HCT116 (cell line): ENCODE measurements at regions of chr19 and their contacts with region 1.

Region 1: DNA sequence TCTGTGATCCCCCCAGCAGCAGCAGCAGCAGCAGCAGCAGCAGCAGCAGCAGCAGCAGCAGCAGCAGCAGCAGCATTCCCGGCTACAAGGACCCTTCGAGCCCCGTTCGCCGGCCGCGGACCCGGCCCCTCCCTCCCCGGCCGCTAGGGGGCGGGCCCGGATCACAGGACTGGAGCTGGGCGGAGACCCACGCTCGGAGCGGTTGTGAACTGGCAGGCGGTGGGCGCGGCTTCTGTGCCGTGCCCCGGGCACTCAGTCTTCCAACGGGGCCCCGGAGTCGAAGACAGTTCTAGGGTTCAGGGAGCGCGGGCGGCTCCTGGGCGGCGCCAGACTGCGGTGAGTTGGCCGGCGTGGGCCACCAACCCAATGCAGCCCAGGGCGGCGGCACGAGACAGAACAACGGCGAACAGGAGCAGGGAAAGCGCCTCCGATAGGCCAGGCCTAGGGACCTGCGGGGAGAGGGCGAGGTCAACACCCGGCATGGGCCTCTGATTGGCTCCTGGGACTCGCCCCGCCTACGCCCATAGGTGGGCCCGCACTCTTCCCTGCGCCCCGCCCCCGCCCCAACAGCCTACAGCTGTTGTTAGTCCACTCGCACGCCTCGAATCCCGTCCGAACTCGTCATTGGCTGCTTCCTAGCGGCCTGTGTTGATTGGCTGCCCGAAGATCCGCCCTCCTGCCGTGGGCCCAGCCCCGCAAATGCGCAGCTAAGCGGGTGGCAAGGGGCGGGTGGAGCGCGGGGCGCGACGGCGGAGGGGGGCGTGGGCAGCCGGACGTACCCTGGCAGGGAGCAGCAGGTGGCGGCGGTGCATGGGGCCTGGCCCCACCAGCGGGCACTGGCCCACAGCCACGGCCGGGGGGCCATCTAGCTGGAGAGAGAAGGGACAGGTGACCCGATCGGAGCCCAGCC is 1.4 kb upstream of the SIX5 start:
- DNase-seq: peak; percentile 96
- ATAC-seq: peak; percentile 77
- H3K4me3 ChIP-seq: peak overlapping the region; percentile 62 to 84
- H3K27ac ChIP-seq: peak overlapping the region; percentile 94
- H3K4me1 ChIP-seq: peaks cover 14 to 43% of the 10 kb centered on the region in 2 experiments
- H3K27me3 ChIP-seq: no peaks in the 10 kb centered on the region
- CTCF ChIP-seq: peak; percentile 85 to 86 (median 86); a peak in 5 of 6 replicates
- POLR2A ChIP-seq: peak; percentile 17
- RAD21 ChIP-seq: peak; percentile 88

Region 2: DNA sequence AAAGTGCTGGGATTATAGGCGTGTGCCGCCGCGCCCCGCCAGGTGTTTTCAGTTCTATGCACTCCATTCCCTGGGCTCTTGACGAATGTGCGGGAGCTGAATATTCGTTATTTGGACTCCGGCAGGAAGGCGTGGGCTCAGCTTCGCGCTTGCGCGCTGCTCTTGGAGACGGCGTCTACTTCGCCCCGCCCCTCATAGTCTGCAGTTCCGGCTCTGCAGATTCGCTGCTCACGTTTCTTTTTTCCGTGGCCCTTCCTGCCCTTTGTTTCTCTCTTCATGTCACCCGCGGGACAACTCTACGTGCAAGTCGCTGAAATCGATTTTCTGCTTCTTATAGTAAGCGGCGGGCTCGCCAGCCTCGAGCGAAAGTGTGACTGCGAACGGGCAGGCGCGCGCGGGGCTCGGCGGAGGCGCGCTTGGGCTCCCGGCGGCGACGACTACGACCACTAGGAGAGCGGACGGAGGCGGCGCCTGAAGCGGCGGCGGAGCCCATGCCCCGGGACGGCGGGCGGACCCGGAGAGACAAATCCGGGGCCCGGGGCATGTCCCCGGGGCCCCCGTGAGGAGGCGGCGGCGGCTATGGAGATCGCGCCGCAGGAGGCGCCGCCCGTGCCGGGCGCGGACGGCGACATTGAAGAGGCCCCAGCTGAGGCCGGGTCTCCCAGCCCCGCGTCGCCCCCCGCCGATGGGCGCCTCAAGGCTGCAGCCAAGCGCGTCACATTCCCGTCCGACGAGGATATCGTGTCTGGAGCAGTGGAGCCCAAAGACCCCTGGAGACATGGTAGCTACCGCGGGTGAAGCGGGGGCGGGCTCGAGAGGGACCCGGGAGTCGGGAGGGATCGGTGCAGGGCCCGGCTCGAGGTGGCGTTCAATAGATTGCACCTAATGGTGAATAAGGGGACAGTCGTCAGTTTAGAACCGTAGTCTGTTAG is 677.4 kb before region 1 on chr19 and contains the start of gene PPP1R37:
- CTCF ChIA-PET with region 1: no interaction called
- POLR2A ChIA-PET with region 1: no interaction called
- RAD21 ChIA-PET with region 1: no interaction called
- intact Hi-C with region 1: loop called (anchors 10 kb)
- DNase-seq: peak; percentile 98
- ATAC-seq: peak; percentile 71
- H3K4me3 ChIP-seq: peak within 1 kb of the TSS; percentile 94 to 96
- H3K27ac ChIP-seq: peak within 1 kb of the TSS; percentile 84
- H3K4me1 ChIP-seq: peaks cover 13 to 57% of the 10 kb centered on the region in 2 experiments; a peak in 3 of 4 replicates
- H3K27me3 ChIP-seq: no peaks in the 10 kb centered on the region
- CTCF ChIP-seq: peak in 2 of 3 experiments; percentile 10 to 32; a peak in 1 of 6 replicates
- POLR2A ChIP-seq: peak; percentile 26
- RAD21 ChIP-seq: no peak
- total RNA-seq, gene PPP1R37: 32.7 TPM

Region 3: DNA sequence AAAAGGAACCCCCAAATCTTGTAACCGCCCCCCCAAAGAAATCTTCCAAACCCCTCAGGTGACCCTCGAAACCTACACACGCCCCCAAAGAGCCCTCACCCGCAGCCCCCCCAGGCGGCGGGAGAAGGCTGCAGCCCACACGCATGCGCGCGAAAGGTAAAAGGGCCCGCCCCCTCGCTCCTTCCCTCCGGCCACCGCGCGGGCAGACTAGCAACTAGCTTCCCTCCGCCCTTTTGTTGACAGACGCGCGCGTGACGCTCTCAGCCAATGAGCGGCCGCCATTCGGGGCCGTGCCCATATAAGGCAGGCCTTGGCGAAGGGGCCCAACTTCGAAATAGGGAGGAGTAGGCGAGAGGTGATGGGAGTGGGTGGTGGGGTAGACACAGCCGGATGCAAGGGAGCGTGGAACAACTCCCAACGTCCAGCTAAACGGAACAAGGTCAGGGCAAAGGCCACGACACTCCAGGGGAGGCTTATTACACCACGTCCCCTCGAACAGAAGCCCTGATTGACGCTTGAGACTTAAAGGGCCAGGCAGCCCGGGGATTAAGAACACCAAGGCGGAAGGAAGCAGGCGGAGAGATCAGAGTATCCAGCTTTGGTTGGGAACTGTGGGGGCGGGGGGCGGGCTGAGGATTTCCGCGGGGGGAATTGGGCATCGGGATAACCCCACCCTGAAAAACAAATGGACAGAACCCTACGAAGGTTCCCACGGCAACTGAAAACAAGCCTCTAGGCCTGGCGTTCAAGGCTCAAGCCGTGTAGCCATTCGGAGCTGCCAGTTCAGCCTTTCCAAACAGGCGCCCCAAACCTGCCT is 53.1 kb before region 1 on chr19:
- CTCF ChIA-PET with region 1: interaction called, 9 read pairs
- POLR2A ChIA-PET with region 1: interaction called, 16 read pairs
- RAD21 ChIA-PET with region 1: interaction called in 1 of 2 experiments, 5 read pairs
- intact Hi-C with region 1: loop called (anchors 2 kb)
- DNase-seq: peak; percentile 96
- ATAC-seq: peak; percentile 92
- H3K4me3 ChIP-seq: peak overlapping the region; percentile 52 to 64
- H3K27ac ChIP-seq: peak overlapping the region; percentile 58
- H3K4me1 ChIP-seq: peaks cover 40 to 52% of the 10 kb centered on the region in 2 experiments
- H3K27me3 ChIP-seq: no peaks in the 10 kb centered on the region
- CTCF ChIP-seq: 0 out of 6 replicates have a peak, but pooled peaks of 1 of the 3 experiments have one; percentile 8
- POLR2A ChIP-seq: no peak
- RAD21 ChIP-seq: no peak

Region 4: DNA sequence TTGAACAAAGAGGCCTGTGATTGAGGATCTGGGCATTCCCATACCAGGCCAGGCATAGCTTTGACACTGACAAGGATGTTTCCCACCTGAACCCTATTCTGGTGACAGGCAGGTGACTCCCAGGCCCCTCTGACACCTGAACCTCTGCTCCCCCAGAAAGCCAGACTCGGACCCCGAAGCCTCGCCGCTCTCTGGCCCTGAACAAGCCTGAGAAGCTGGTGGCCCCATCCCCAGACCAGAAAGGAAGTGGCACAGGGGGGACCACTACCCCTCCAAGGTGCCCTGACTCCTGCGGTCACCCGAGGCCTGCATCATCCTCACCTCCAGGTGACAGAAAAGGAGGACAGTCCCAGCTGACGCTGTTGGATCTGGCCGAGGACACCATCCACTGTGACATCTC is 16.1 kb before region 1 on chr19:
- CTCF ChIA-PET with region 1: interaction called, 15 read pairs
- POLR2A ChIA-PET with region 1: interaction called, 10 read pairs
- RAD21 ChIA-PET with region 1: interaction called in 1 of 2 experiments, 3 read pairs
- intact Hi-C with region 1: no loop called
- DNase-seq: no peak
- ATAC-seq: no peak
- H3K4me3 ChIP-seq: no peak overlapping the region
- H3K27ac ChIP-seq: no peak overlapping the region
- H3K4me1 ChIP-seq: no peaks in the 10 kb centered on the region
- H3K27me3 ChIP-seq: no peaks in the 10 kb centered on the region
- CTCF ChIP-seq: no peak
- POLR2A ChIP-seq: no peak
- RAD21 ChIP-seq: no peak

Region 5: DNA sequence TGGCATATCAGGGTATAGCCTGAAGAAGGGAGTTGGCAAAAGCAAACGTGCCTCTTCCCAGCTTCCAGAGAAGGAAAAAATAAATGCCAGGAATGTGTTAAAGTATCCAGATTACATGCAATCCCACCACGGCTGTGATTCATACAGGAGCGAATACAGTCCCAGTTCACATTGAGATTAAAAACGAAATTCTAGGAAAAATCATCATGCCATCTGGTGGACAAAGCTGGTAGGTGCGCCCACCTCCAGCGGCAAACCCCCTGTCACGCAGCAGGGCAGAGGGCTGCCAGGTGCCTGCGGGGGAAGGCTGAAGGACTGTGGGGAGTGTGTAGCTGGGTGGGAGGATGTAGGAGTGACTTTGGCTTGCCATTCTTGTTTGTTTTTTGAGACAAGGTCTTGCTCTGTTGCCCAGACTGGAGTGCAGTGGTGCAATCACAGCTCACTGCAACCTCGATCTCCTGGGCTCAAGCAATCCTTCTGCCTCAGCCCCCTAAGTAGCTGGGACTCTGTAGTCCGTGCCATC is 28.6 kb after region 1 on chr19:
- CTCF ChIA-PET with region 1: interaction called, 54 read pairs
- POLR2A ChIA-PET with region 1: interaction called, 9 read pairs
- RAD21 ChIA-PET with region 1: interaction called, 7 to 8 read pairs
- intact Hi-C with region 1: loop called (anchors 1 kb)
- DNase-seq: no peak
- ATAC-seq: peak; percentile 92
- H3K4me3 ChIP-seq: no peak overlapping the region
- H3K27ac ChIP-seq: no peak overlapping the region
- H3K4me1 ChIP-seq: peaks cover 0 to 18% of the 10 kb centered on the region in 2 experiments; a peak in 2 of 4 replicates
- H3K27me3 ChIP-seq: no peaks in the 10 kb centered on the region
- CTCF ChIP-seq: peak; percentile 79 to 85 (median 81)
- POLR2A ChIP-seq: no peak
- RAD21 ChIP-seq: peak; percentile 79

Region 6: DNA sequence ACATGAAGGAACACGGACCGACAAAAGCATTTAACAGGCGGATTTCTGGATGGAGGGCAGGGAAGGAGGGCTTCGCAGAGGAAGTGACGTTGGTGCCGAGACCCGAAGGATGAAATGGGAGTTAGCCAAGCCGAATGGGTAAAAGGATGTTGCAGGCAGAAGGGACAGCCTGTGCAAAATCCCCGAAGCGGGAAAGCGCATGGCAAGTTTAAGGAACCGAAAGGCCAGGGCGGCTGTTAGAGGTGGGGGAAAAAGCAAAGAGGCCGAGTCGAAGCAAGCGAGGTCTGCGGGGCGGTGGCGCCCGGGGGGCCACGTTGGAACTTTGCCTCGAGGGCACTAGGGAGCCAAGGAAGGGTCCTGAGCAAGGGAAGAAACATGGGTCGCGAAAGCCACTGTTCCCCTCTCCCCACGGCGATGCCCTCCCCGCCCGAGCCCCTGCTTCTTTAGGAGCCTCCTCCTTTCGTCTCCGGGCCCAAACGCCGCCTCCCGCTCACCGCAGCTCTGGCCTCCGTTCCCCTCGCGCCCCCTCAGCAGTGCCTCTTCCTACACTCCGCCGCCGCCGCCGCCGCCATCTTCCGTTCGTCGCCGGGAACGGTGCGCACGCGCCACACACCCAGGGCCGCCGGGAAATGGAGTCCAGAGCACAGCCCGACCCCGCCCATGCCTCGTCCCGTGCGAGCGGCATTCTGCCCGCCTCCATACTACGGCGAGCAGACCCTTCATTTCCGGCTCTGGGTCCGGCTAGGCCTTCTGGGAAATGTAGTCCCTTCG is 92.3 kb after region 1 on chr19 and contains the start of gene SYMPK:
- CTCF ChIA-PET with region 1: interaction called, 11 read pairs
- POLR2A ChIA-PET with region 1: interaction called, 3 read pairs
- RAD21 ChIA-PET with region 1: no interaction called
- intact Hi-C with region 1: no loop called
- DNase-seq: peak; percentile 96
- ATAC-seq: peak; percentile 91
- H3K4me3 ChIP-seq: peak within 1 kb of the TSS; percentile 91 to 93
- H3K27ac ChIP-seq: peak within 1 kb of the TSS; percentile 91
- H3K4me1 ChIP-seq: peaks cover 11 to 35% of the 10 kb centered on the region in 2 experiments
- H3K27me3 ChIP-seq: no peaks in the 10 kb centered on the region
- CTCF ChIP-seq: no peak
- POLR2A ChIP-seq: peak; percentile 52
- RAD21 ChIP-seq: no peak
- total RNA-seq, gene SYMPK: 117 TPM

Region 7: GRCh38 chr19:45913874-45914830 is 143.7 kb after region 1 on chr19 and contains the start of gene NANOS2:
- CTCF ChIA-PET with region 1: no interaction called
- POLR2A ChIA-PET with region 1: no interaction called
- RAD21 ChIA-PET with region 1: no interaction called
- intact Hi-C with region 1: no loop called
- DNase-seq: peak; percentile 56
- ATAC-seq: peak; percentile 91
- H3K4me3 ChIP-seq: no peak within 1 kb of the TSS
- H3K27ac ChIP-seq: no peak within 1 kb of the TSS
- H3K4me1 ChIP-seq: peaks cover 4 to 12% of the 10 kb centered on the region in 2 experiments; a peak in 3 of 4 replicates
- H3K27me3 ChIP-seq: no peaks in the 10 kb centered on the region
- CTCF ChIP-seq: peak; percentile 52 to 69 (median 55)
- POLR2A ChIP-seq: no peak
- RAD21 ChIP-seq: peak; percentile 79
- total RNA-seq, gene NANOS2: not detected